ENCODE measurements at regions of chr3 and their contacts with region 1.

Region 1: DNA sequence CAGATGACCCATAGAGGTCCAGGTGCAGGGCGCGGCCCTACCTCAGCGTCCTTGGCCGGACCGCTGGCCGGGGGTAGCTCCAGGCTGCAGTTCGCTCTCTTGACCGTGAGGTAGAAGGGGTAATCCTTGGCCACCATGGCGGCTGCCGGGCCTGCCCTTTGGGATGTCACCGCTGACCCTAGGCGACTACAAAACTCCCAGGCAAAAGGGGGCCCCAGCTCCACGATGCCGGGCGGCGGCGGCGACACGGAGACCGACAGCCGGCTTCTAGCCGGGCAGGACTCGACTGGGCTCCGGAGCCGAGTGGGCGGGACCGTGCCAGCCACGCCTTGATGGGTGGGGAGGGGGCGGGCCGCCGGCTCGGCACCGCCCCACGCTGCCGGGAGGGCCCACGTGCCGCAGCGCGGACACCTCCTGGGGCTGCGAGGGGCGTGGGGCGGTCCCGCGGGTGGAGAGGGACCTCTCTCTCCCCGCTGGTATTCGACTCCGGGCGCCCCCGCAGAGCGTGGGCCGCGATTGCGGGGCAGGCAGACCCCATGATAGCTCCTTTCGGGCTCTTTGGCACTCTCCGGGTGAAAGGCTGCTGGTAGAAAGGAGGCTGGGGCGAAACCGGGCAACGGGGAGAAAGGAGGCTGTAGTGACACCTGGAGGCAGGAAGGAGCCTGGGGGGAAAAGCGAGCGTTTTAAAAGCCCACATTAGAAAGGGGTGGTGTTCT is at the start of gene ARHGEF3:
- DNase-seq: peak; percentile 82 to 96 (median 87)
- ATAC-seq: peak; percentile 82
- H3K4me3 ChIP-seq: peak within 1 kb of the TSS; percentile 98 to 99
- H3K4me3 Mint-ChIP-seq: peak within 1 kb of the TSS; percentile 95
- H3K27ac ChIP-seq: peak within 1 kb of the TSS; percentile 71 to 85
- H3K27ac Mint-ChIP-seq: peak within 1 kb of the TSS; percentile 93
- H3K4me1 ChIP-seq: peaks cover 23% of the 10 kb centered on the region
- H3K4me1 Mint-ChIP-seq: peaks cover 37% of the 10 kb centered on the region
- H3K27me3 ChIP-seq: no peaks in the 10 kb centered on the region
- H3K27me3 Mint-ChIP-seq: no peaks in the 10 kb centered on the region
- CTCF ChIP-seq: peak; percentile 56
- total RNA-seq, gene ARHGEF3: 38.8 to 39.9 TPM

Region 2: GRCh38 chr3:56573501-56573900 is 228.3 kb before region 1 on chr3:
- CTCF ChIA-PET with region 1: no interaction called
- POLR2A ChIA-PET with region 1: no interaction called
- intact Hi-C with region 1: no loop called
- DNase-seq: no peak
- ATAC-seq: no peak
- H3K4me3 ChIP-seq: no peak overlapping the region
- H3K4me3 Mint-ChIP-seq: no peak overlapping the region
- H3K27ac ChIP-seq: no peak overlapping the region
- H3K27ac Mint-ChIP-seq: no peak overlapping the region
- H3K4me1 ChIP-seq: no peaks in the 10 kb centered on the region
- H3K4me1 Mint-ChIP-seq: peaks cover 31% of the 10 kb centered on the region
- H3K27me3 ChIP-seq: no peaks in the 10 kb centered on the region
- H3K27me3 Mint-ChIP-seq: no peaks in the 10 kb centered on the region
- CTCF ChIP-seq: no peak

Region 3: DNA sequence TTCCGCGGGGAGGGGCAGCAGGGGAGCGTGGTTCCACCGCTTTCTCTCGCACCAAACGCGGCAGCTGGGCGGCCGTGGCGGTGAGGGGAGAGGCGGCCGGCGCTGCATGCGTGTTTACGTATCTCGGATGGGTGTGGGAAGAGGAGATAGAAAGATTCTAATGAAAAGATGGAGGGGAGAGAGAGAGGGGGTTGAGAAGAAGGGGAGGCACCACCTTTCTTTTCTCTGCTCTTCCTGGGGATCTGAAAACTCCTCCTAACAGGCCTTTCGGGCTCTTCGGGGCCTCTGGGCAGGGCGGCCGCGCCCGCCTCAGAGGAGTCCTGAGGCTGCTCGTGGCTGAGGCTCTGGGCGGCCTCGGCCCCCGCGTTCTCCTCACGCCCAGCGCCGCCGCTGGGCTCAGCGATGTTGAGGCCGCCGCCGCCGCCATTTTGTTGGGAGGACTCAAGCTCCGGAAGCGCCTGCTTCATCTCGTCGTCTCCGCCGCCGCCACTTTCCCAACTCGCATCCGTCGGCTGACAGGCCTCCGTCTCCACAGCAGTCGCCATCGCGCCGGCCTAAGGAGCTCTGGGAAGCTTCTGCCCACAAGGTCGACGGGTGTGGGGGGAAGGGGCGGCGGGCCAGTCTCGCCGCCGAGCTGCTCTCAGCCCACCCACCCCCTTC is 119.2 kb before region 1 on chr3:
- CTCF ChIA-PET with region 1: interaction called, 3 read pairs
- POLR2A ChIA-PET with region 1: interaction called, 26 read pairs
- intact Hi-C with region 1: loop called in 1 of 2 experiments (anchors 1 kb)
- DNase-seq: peak; percentile 52 to 88 (median 77)
- ATAC-seq: peak; percentile 69
- H3K4me3 ChIP-seq: peak overlapping the region; percentile 89 to 91
- H3K4me3 Mint-ChIP-seq: peak overlapping the region; percentile 95
- H3K27ac ChIP-seq: peak overlapping the region; percentile 98
- H3K27ac Mint-ChIP-seq: peak overlapping the region; percentile 99
- H3K4me1 ChIP-seq: peaks cover 47% of the 10 kb centered on the region
- H3K4me1 Mint-ChIP-seq: peaks cover 39% of the 10 kb centered on the region
- H3K27me3 ChIP-seq: no peaks in the 10 kb centered on the region
- H3K27me3 Mint-ChIP-seq: no peaks in the 10 kb centered on the region
- CTCF ChIP-seq: no peak

Region 4: DNA sequence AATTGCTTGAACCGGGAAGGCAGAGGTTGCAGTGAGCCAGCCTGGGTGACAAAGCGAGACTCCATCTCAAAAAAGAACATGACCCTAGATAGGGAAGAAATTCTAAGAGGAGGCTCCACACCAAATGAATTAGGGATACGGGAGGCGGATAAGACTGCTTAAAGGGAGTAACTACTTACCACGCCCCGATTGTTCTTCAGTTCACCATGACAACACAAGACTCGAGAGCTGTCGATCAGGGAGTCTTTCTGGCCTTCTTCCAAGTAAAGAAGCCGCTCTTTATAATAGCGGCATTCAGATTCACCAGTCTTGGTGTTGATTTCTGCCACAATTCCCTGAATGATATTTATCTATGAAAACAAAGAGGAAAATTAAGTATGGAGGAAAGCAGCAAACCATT is 64.8 kb before region 1 on chr3:
- CTCF ChIA-PET with region 1: interaction called, 44 read pairs
- POLR2A ChIA-PET with region 1: interaction called, 14 read pairs
- intact Hi-C with region 1: no loop called
- DNase-seq: no peak
- ATAC-seq: no peak
- H3K4me3 ChIP-seq: no peak overlapping the region
- H3K4me3 Mint-ChIP-seq: no peak overlapping the region
- H3K27ac ChIP-seq: peak overlapping the region in 1 of 2 experiments; percentile 14
- H3K27ac Mint-ChIP-seq: peak overlapping the region; percentile 64
- H3K4me1 ChIP-seq: peaks cover 32% of the 10 kb centered on the region
- H3K4me1 Mint-ChIP-seq: peaks cover 49% of the 10 kb centered on the region
- H3K27me3 ChIP-seq: no peaks in the 10 kb centered on the region
- H3K27me3 Mint-ChIP-seq: no peaks in the 10 kb centered on the region
- CTCF ChIP-seq: no peak

Region 5: DNA sequence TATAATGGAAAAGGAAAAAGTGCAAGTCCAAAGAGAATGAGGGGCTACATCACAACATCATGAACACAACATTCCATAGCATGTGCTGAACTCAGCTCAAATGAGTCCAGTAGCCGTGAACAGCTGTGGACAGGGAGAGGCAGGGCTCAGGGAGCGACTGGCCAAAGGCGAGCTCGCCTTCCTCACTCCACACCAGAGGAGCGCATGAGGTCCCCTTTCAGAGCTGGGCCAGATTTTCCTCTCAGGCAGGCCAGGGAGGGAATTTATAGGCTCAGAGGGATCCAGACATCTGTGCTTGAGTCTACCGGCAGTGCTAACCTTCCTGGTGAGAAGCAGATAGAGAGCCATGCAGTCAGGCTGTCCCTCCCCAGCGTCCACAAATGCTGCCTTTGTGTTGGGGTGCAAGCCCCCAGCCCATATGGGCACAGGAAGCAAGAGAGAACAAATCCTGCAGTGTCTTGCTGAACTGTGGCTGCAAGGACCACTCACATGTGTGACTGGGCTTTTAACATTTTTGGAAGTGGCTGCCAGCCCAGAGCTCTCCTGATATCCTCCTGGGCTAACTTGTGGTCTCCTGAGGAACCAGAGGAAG is 32.6 kb before region 1 on chr3:
- CTCF ChIA-PET with region 1: interaction called, 57 read pairs
- POLR2A ChIA-PET with region 1: interaction called, 7 read pairs
- intact Hi-C with region 1: no loop called
- DNase-seq: no peak
- ATAC-seq: no peak
- H3K4me3 ChIP-seq: no peak overlapping the region
- H3K4me3 Mint-ChIP-seq: no peak overlapping the region
- H3K27ac ChIP-seq: peak overlapping the region in 1 of 2 experiments; percentile 41
- H3K27ac Mint-ChIP-seq: peak overlapping the region; percentile 77
- H3K4me1 ChIP-seq: peaks cover 53% of the 10 kb centered on the region
- H3K4me1 Mint-ChIP-seq: peaks cover 74% of the 10 kb centered on the region
- H3K27me3 ChIP-seq: no peaks in the 10 kb centered on the region
- H3K27me3 Mint-ChIP-seq: no peaks in the 10 kb centered on the region
- CTCF ChIP-seq: no peak

Region 6: DNA sequence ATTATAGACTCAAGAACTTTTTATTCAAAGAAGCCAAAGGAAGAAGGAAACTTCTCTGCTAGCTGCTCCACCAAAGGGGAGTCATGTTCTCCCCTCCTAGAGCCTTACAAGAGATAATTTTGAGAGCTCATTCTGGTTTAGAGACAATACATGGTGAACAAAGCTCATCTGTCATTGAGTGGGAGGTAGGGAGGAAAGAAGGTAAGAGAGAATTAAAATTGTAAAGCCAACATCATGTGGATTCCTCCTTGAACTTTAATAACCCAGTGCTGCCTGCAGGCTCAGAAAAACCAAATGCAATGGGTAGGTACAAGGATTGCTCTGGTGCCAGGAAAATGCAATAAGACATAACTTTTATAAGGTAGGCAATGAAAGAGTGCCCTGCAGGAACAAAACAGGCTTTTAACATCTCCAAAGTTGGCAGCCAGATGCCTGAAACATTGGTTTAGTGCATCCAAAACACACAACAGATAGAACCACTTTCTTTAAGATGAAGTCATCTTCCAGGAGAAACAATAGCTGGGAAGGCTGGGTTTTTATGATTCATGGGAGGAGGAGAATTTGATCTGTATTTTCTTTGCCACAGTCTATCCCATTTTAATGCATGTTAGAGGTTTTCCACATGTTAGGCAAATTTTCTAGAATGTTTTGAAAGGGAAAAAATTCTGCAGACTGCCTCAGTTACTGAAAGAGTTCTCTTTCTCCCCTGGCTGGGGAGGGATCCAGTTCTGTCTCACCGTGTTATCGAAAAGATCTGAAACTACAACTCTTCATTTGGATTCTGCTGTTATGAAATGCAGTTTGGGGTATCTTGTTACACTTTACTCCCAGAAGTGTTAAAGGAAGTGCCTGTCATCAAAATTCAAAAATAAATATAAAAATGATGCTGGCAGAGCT is 11.2 kb after region 1 on chr3:
- CTCF ChIA-PET with region 1: interaction called, 50 read pairs
- POLR2A ChIA-PET with region 1: interaction called, 8 read pairs
- intact Hi-C with region 1: no loop called
- DNase-seq: no peak
- ATAC-seq: no peak
- H3K4me3 ChIP-seq: no peak overlapping the region
- H3K4me3 Mint-ChIP-seq: peak overlapping the region; percentile 43
- H3K27ac ChIP-seq: peak overlapping the region in 1 of 2 experiments; percentile 65
- H3K27ac Mint-ChIP-seq: peak overlapping the region; percentile 53
- H3K4me1 ChIP-seq: peaks cover 39% of the 10 kb centered on the region
- H3K4me1 Mint-ChIP-seq: peaks cover 68% of the 10 kb centered on the region
- H3K27me3 ChIP-seq: no peaks in the 10 kb centered on the region
- H3K27me3 Mint-ChIP-seq: no peaks in the 10 kb centered on the region
- CTCF ChIP-seq: no peak

Region 7: GRCh38 chr3:56974247-56974930 is 172.6 kb after region 1 on chr3:
- CTCF ChIA-PET with region 1: interaction called, 17 read pairs
- POLR2A ChIA-PET with region 1: no interaction called
- intact Hi-C with region 1: no loop called
- DNase-seq: no peak
- ATAC-seq: no peak
- H3K4me3 ChIP-seq: no peak overlapping the region
- H3K4me3 Mint-ChIP-seq: no peak overlapping the region
- H3K27ac ChIP-seq: no peak overlapping the region
- H3K27ac Mint-ChIP-seq: no peak overlapping the region
- H3K4me1 ChIP-seq: no peaks in the 10 kb centered on the region
- H3K4me1 Mint-ChIP-seq: no peaks in the 10 kb centered on the region
- H3K27me3 ChIP-seq: no peaks in the 10 kb centered on the region
- H3K27me3 Mint-ChIP-seq: no peaks in the 10 kb centered on the region
- CTCF ChIP-seq: no peak

Region 8: DNA sequence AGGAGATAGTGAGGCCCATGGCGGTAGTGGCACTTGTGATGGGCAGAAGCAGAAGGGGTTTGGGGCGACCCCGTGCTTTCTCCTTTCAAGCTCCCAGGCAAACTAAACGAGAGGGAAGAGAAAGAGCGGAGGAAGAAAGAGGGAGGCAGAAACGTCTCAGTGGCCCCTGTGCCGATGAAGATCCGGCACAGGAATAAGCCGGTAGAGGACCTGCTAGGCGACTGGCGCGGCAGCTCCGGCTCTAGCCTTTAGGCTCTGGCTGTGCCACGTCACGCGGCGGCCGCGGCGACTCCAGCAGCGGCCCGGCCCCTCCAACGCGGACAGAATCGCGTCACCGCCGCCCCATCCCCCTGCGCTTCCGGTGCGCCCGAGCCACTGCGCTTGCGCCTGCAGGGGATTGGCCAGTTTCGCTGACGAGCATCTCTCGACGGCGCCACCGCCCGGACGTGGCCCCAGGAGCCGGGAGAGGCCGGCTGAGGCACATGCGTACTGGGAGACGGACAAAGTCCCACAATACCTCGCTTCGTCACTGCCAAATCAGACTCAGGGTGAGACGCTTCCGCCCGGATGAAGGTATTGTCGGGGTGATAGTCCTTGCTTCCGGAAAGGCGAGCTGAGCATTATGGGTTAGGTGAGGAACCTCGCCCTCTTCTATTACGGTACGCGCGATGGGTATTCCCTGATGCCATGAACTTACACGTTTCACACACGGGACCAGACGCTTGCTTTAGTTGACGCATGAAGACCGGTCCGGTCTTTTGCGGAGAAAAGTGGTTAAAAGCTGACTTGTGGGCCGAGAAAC is 795.5 kb after region 1 on chr3 and contains the start of gene ARF4:
- CTCF ChIA-PET with region 1: no interaction called
- POLR2A ChIA-PET with region 1: no interaction called
- intact Hi-C with region 1: loop called in 1 of 2 experiments (anchors 10 kb)
- DNase-seq: peak; percentile 98 to 100 (median 99)
- ATAC-seq: peak; percentile 87
- H3K4me3 ChIP-seq: peak within 1 kb of the TSS; percentile 92 to 95
- H3K4me3 Mint-ChIP-seq: peak within 1 kb of the TSS; percentile 99
- H3K27ac ChIP-seq: peak within 1 kb of the TSS; percentile 93 to 95
- H3K27ac Mint-ChIP-seq: peak within 1 kb of the TSS; percentile 100
- H3K4me1 ChIP-seq: peaks cover 42% of the 10 kb centered on the region
- H3K4me1 Mint-ChIP-seq: peaks cover 58% of the 10 kb centered on the region
- H3K27me3 ChIP-seq: no peaks in the 10 kb centered on the region
- H3K27me3 Mint-ChIP-seq: no peaks in the 10 kb centered on the region
- CTCF ChIP-seq: no peak
- total RNA-seq, gene ARF4: 72.7 to 73.5 TPM